CD8-positive, alpha-beta T cell (primary cell): ENCODE measurements at regions of chr1 and their contacts with region 1.

Region 1: GRCh38 chr1:27436204-27437159 is 44.1 kb downstream of the GPR3 start:
- DNase-seq: peak in 3 of 9 experiments; percentile 28 to 69 (median 52)
- ATAC-seq: peak; percentile 88
- H3K4me3 ChIP-seq: peak overlapping the region; percentile 8 to 30
- H3K4me3 Mint-ChIP-seq: peak overlapping the region; percentile 33
- H3K27ac ChIP-seq: peak overlapping the region in 1 of 2 experiments; percentile 66
- H3K27ac Mint-ChIP-seq: peak overlapping the region; percentile 82
- H3K4me1 ChIP-seq: peaks cover 75% of the 10 kb centered on the region
- H3K4me1 Mint-ChIP-seq: peaks cover 75% of the 10 kb centered on the region
- H3K27me3 ChIP-seq: no peaks in the 10 kb centered on the region
- H3K27me3 Mint-ChIP-seq: no peaks in the 10 kb centered on the region
- CTCF ChIP-seq: no peak

Region 2: DNA sequence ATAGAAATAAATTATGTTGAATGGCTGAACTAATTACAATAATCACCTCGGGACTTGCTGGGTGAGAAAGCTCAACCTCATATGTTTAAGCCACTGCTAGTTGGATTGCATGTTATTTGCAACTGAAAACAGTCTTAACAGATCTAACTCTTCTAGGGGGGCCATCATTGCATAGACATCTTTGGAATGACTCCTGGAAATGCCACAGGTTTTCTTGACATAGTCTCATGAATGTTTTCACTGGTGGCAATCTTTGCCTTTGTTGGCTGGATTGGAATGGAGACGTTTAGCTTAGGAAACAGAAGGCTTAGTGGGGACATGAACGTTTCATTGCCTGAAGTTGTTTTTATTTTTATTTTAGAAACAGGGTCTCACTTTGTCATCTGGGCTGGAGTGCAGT is 210.9 kb before region 1 on chr1:
- CTCF ChIA-PET with region 1: no interaction called
- POLR2A ChIA-PET with region 1: no interaction called
- intact Hi-C with region 1: no loop called
- DNase-seq: no peak
- ATAC-seq: no peak
- H3K4me3 ChIP-seq: no peak overlapping the region
- H3K4me3 Mint-ChIP-seq: no peak overlapping the region
- H3K27ac ChIP-seq: no peak overlapping the region
- H3K27ac Mint-ChIP-seq: no peak overlapping the region
- H3K4me1 ChIP-seq: no peaks in the 10 kb centered on the region
- H3K4me1 Mint-ChIP-seq: no peaks in the 10 kb centered on the region
- H3K27me3 ChIP-seq: no peaks in the 10 kb centered on the region
- H3K27me3 Mint-ChIP-seq: no peaks in the 10 kb centered on the region
- CTCF ChIP-seq: no peak

Region 3: GRCh38 chr1:27257155-27257554 is 179.3 kb before region 1 on chr1:
- CTCF ChIA-PET with region 1: no interaction called
- POLR2A ChIA-PET with region 1: no interaction called
- intact Hi-C with region 1: no loop called
- DNase-seq: no peak
- ATAC-seq: no peak
- H3K4me3 ChIP-seq: no peak overlapping the region
- H3K4me3 Mint-ChIP-seq: no peak overlapping the region
- H3K27ac ChIP-seq: no peak overlapping the region
- H3K27ac Mint-ChIP-seq: no peak overlapping the region
- H3K4me1 ChIP-seq: peaks cover 45% of the 10 kb centered on the region
- H3K4me1 Mint-ChIP-seq: peaks cover 44% of the 10 kb centered on the region
- H3K27me3 ChIP-seq: no peaks in the 10 kb centered on the region
- H3K27me3 Mint-ChIP-seq: no peaks in the 10 kb centered on the region
- CTCF ChIP-seq: no peak

Region 4: GRCh38 chr1:27478098-27478497 is 41.6 kb after region 1 on chr1:
- CTCF ChIA-PET with region 1: no interaction called
- POLR2A ChIA-PET with region 1: interaction called, 11 read pairs
- intact Hi-C with region 1: no loop called
- DNase-seq: no peak
- ATAC-seq: no peak
- H3K4me3 ChIP-seq: no peak overlapping the region
- H3K4me3 Mint-ChIP-seq: no peak overlapping the region
- H3K27ac ChIP-seq: no peak overlapping the region
- H3K27ac Mint-ChIP-seq: no peak overlapping the region
- H3K4me1 ChIP-seq: peaks cover 40% of the 10 kb centered on the region
- H3K4me1 Mint-ChIP-seq: peaks cover 64% of the 10 kb centered on the region
- H3K27me3 ChIP-seq: no peaks in the 10 kb centered on the region
- H3K27me3 Mint-ChIP-seq: no peaks in the 10 kb centered on the region
- CTCF ChIP-seq: no peak

Region 5: GRCh38 chr1:27589841-27590426 is 153.5 kb after region 1 on chr1:
- CTCF ChIA-PET with region 1: no interaction called
- POLR2A ChIA-PET with region 1: no interaction called
- intact Hi-C with region 1: no loop called
- DNase-seq: no peak
- ATAC-seq: no peak
- H3K4me3 ChIP-seq: no peak overlapping the region
- H3K4me3 Mint-ChIP-seq: no peak overlapping the region
- H3K27ac ChIP-seq: no peak overlapping the region
- H3K27ac Mint-ChIP-seq: no peak overlapping the region
- H3K4me1 ChIP-seq: peaks cover 5% of the 10 kb centered on the region
- H3K4me1 Mint-ChIP-seq: no peaks in the 10 kb centered on the region
- H3K27me3 ChIP-seq: no peaks in the 10 kb centered on the region
- H3K27me3 Mint-ChIP-seq: no peaks in the 10 kb centered on the region
- CTCF ChIP-seq: no peak

Region 6: DNA sequence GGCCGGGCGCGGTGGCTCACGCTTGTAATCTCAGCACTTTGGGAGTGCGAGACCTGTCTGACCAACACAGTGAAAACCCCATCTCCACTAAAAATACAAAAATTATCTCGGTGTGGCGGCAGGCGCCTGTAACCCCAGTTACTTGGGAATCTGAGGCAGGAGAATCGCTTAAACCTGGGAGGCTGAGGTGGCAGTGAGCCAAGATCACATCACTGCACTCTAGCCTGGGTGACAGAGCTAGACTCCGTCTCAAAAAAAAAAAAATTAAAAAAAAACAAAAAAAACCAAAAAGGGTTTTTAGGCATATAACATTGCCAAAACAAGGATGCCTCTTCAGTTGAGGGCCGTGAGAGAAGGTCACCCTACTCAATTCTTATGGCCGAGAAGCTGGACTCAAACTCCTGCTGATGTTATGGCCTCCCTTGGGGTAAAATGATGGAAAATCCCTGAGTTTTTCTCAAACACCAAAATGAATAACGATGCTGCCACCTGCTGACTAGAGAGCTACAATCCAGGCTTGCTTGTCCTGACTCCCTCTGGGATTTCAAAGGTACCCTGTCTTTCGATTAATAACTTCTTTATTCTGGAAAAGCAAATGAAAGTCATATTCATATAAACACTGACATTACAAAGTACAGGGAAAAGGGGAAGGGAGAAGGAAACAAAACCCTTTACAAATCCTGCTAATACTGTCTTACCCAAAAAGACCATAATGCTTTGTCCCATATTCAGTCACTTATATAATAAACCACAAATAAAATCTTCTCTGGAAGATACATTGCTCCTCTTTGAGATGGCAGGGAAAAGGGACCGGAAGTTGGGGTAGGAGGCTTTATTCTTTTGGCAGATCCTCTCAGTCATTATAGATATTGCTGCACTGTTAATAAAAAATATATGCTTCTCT is 1166.3 kb after region 1 on chr1:
- CTCF ChIA-PET with region 1: no interaction called
- POLR2A ChIA-PET with region 1: no interaction called
- intact Hi-C with region 1: no loop called
- DNase-seq: peak in 4 of 9 experiments; percentile 24 to 62 (median 46)
- ATAC-seq: no peak
- H3K4me3 ChIP-seq: no peak overlapping the region
- H3K4me3 Mint-ChIP-seq: no peak overlapping the region
- H3K27ac ChIP-seq: no peak overlapping the region
- H3K27ac Mint-ChIP-seq: no peak overlapping the region
- H3K4me1 ChIP-seq: no peaks in the 10 kb centered on the region
- H3K4me1 Mint-ChIP-seq: no peaks in the 10 kb centered on the region
- H3K27me3 ChIP-seq: no peaks in the 10 kb centered on the region
- H3K27me3 Mint-ChIP-seq: no peaks in the 10 kb centered on the region
- CTCF ChIP-seq: peak; percentile 31